Common myeloid progenitor, CD34-positive (primary cell): ENCODE measurements at regions of chr19 and their contacts with region 1.

Region 1: DNA sequence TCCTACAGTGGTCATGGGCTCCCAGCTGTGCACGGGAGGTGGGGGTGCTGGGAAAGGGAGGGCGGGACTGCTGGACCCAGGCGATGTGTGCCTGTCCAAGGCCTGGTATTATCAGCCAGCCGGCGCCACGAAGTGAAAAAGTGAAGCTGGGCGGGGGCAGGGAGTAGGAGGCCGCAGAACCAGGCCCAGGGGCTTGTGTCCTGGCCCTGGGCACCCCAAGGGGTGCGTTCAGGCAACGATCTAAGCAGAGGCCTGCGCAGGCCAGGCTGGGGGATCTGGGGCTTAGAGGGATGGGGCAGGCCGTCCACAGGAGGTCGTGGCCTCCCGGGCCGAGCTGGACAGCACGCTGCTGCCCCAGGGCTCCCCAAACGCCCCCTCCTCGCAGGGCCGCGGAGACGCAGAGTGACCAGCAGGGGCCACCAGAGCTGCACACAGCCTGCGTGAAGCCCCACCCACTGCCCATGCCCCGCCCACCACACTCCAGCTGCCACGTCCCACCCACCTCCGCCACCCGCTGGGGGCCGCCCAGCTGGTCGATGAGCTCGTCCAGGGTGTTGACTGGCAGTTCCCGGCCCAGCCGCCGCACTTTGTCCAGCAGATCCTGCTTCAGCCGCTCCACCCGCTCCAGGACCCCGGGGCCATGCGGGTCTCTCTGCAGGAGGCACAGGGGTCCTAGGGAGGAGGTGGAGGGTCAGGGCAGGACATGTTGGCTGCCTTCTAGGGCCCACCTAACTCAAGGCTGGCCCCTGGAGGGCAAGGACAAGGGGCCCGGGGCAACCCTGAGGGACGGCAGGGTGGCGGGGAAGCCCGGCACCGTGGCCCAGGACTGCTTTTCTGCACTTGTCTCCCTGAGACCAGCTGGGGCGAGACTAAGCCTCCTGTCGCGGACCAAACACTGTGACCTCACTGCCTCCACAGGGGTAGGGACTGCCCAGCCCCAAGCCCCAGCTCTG is 9.5 kb downstream of the GPX4 start:
- DNase-seq: peak; percentile 87 to 94 (median 91)
- H3K4me3 ChIP-seq: no peak overlapping the region
- H3K27ac ChIP-seq: no peak overlapping the region
- H3K4me1 ChIP-seq: peaks cover 0 to 9% (median 5%) of the 10 kb centered on the region in 4 experiments
- H3K27me3 ChIP-seq: no peaks in the 10 kb centered on the region

Region 2: GRCh38 chr19:1094975-1095701 is 18.2 kb before region 1 on chr19 and contains the start of gene POLR2E:
- CTCF ChIA-PET with region 1: no interaction called
- POLR2A ChIA-PET with region 1: no interaction called
- DNase-seq: peak; percentile 96 to 99 (median 98)
- H3K4me3 ChIP-seq: peak within 1 kb of the TSS; percentile 67 to 93 (median 84)
- H3K27ac ChIP-seq: peak within 1 kb of the TSS; percentile 40 to 86
- H3K4me1 ChIP-seq: peaks cover 0 to 36% (median 29%) of the 10 kb centered on the region in 4 experiments
- H3K27me3 ChIP-seq: no peaks in the 10 kb centered on the region

Region 3: GRCh38 chr19:1131738-1132551 is 18.6 kb after region 1 on chr19:
- CTCF ChIA-PET with region 1: interaction called, 13 read pairs
- POLR2A ChIA-PET with region 1: interaction called, 4 read pairs
- DNase-seq: peak; percentile 89 to 95 (median 93)
- H3K4me3 ChIP-seq: peak overlapping the region; percentile 64 to 88 (median 73)
- H3K27ac ChIP-seq: peak overlapping the region; percentile 54 to 84
- H3K4me1 ChIP-seq: peaks cover 0 to 73% (median 68%) of the 10 kb centered on the region in 4 experiments
- H3K27me3 ChIP-seq: no peaks in the 10 kb centered on the region

Region 4: GRCh38 chr19:1189419-1189818 is 76.1 kb after region 1 on chr19:
- CTCF ChIA-PET with region 1: interaction called, 33 read pairs
- POLR2A ChIA-PET with region 1: interaction called, 5 read pairs
- DNase-seq: peak in 2 of 3 donors; percentile 60 to 62
- H3K4me3 ChIP-seq: no peak overlapping the region
- H3K27ac ChIP-seq: no peak overlapping the region
- H3K4me1 ChIP-seq: peaks cover 0 to 25% (median 19%) of the 10 kb centered on the region in 4 experiments
- H3K27me3 ChIP-seq: no peaks in the 10 kb centered on the region

Region 5: DNA sequence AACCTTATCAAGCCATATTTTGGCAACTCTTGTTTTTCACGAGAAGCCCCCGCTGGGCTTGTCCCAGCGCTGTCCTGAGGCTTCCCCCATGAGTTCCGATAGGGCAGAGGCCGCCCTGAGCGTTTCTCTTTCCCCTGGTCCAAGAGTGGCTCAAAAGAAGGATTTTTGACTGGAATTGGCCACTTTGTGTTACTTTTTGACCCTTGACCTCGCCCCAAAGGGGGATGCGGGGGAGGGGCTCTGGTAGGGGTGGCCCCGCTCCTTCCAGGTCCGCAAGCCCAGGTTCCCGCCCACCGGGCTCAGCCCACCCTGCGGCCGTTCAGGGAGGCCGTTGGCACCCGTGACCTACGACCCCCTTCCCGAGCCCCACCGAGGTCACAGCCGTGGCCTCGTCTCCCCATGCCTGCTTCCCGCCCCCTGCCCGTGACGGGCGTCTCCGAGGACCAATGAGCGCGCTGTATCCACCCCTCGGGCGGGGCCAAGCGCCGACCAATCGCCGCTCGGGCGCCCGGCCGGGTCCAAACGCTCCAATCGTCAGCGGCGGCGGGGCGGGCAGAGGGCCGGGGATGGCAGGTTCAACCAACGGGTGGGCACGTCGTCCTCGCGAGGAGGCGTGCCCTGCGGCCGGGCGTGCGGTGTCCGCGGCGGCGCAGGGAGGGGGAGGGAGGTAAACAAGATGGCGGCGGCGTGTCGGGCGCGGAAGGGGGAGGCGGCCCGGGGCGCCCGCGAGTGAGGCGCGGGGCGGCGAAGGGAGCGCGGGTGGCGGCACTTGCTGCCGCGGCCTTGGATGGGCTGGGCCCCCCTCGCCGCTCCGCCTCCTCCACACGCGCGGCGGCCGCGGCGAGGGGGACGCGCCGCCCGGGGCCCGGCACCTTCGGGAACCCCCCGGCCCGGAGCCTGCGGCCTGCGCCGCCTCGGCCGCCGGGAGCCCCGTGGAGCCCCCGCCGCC is 92.1 kb after region 1 on chr19 and contains the start of gene STK11:
- CTCF ChIA-PET with region 1: interaction called, 19 read pairs
- POLR2A ChIA-PET with region 1: interaction called, 5 read pairs
- DNase-seq: peak; percentile 96 to 98 (median 98)
- H3K4me3 ChIP-seq: peak within 1 kb of the TSS; percentile 69 to 92 (median 77)
- H3K27ac ChIP-seq: peak within 1 kb of the TSS in 1 of 2 experiments; percentile 71
- H3K4me1 ChIP-seq: peaks cover 0 to 60% (median 53%) of the 10 kb centered on the region in 4 experiments
- H3K27me3 ChIP-seq: no peaks in the 10 kb centered on the region

Region 6: GRCh38 chr19:1213391-1214286 is 100.3 kb after region 1 on chr19:
- CTCF ChIA-PET with region 1: interaction called, 16 read pairs
- POLR2A ChIA-PET with region 1: interaction called, 5 read pairs
- DNase-seq: peak; percentile 94 to 98 (median 98)
- H3K4me3 ChIP-seq: peak overlapping the region in 4 of 7 experiments; percentile 40 to 63 (median 49)
- H3K27ac ChIP-seq: peak overlapping the region; percentile 83 to 89
- H3K4me1 ChIP-seq: peaks cover 0 to 49% (median 46%) of the 10 kb centered on the region in 4 experiments
- H3K27me3 ChIP-seq: no peaks in the 10 kb centered on the region

Region 7: GRCh38 chr19:1223018-1223855 is 109.9 kb after region 1 on chr19:
- CTCF ChIA-PET with region 1: interaction called, 22 read pairs
- POLR2A ChIA-PET with region 1: no interaction called
- DNase-seq: peak in 2 of 3 donors; percentile 52 to 59
- H3K4me3 ChIP-seq: no peak overlapping the region
- H3K27ac ChIP-seq: no peak overlapping the region
- H3K4me1 ChIP-seq: peaks cover 0 to 3% (median 0%) of the 10 kb centered on the region in 4 experiments
- H3K27me3 ChIP-seq: no peaks in the 10 kb centered on the region

Region 8: GRCh38 chr19:1241417-1242095 is 128.2 kb after region 1 on chr19 and contains the start of gene ATP5F1D:
- CTCF ChIA-PET with region 1: interaction called, 11 read pairs
- POLR2A ChIA-PET with region 1: interaction called, 3 read pairs
- DNase-seq: peak; percentile 91 to 93 (median 92)
- H3K4me3 ChIP-seq: peak within 1 kb of the TSS; percentile 68 to 92 (median 79)
- H3K27ac ChIP-seq: peak within 1 kb of the TSS in 1 of 2 experiments; percentile 79
- H3K4me1 ChIP-seq: peaks cover 0 to 74% (median 66%) of the 10 kb centered on the region in 4 experiments
- H3K27me3 ChIP-seq: peaks cover 0 to 19% (median 2%) of the 10 kb centered on the region in 5 experiments

Region 9: DNA sequence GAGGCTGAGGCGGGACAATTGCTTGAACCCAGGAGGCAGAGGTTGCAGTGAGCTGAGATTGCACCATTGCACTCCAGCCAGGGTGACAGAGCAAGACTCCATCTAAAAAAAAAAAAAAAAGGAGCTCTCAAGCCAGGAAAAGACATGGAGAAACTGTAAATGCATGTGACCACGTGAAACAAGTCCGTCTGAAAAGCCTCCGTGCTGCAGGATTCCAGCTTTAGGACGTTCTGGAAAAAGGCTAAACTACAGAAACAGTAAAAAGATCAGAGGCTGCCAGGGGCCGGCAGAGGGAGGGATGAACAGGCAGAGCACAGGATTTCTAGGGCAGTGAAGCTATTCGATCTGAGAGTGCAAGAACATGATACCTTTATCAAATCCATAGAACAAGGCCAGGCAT is 229.7 kb after region 1 on chr19:
- CTCF ChIA-PET with region 1: no interaction called
- POLR2A ChIA-PET with region 1: no interaction called
- DNase-seq: no peak
- H3K4me3 ChIP-seq: no peak overlapping the region
- H3K27ac ChIP-seq: no peak overlapping the region
- H3K4me1 ChIP-seq: peaks cover 0 to 3% (median 0%) of the 10 kb centered on the region in 4 experiments
- H3K27me3 ChIP-seq: no peaks in the 10 kb centered on the region